ENCODE measurements at regions of chr5 and their contacts with region 1.

Region 1: GRCh38 chr5:73540192-73540591 is 25.2 kb downstream of the ANKRA2 start:
- DNase-seq: no peak
- H3K4me3 ChIP-seq: no peak overlapping the region
- H3K27ac ChIP-seq: no peak overlapping the region
- H3K4me1 ChIP-seq: no peaks in the 10 kb centered on the region
- H3K27me3 ChIP-seq: no peaks in the 10 kb centered on the region
- CTCF ChIP-seq: no peak
- EP300 ChIP-seq: no peak
- POLR2A ChIP-seq: no peak

Region 2: GRCh38 chr5:73519531-73520283 is 20.5 kb before region 1 on chr5:
- intact Hi-C with region 1: loop called (anchors 1 kb)
- DNase-seq: no peak
- H3K4me3 ChIP-seq: no peak overlapping the region
- H3K27ac ChIP-seq: no peak overlapping the region
- H3K4me1 ChIP-seq: no peaks in the 10 kb centered on the region
- H3K27me3 ChIP-seq: no peaks in the 10 kb centered on the region
- CTCF ChIP-seq: peak; percentile 35 to 68 (median 52)
- EP300 ChIP-seq: no peak
- POLR2A ChIP-seq: no peak